Motor neuron (in vitro differentiated cells): ENCODE measurements at regions of chr19 and their contacts with region 1.

Region 1: DNA sequence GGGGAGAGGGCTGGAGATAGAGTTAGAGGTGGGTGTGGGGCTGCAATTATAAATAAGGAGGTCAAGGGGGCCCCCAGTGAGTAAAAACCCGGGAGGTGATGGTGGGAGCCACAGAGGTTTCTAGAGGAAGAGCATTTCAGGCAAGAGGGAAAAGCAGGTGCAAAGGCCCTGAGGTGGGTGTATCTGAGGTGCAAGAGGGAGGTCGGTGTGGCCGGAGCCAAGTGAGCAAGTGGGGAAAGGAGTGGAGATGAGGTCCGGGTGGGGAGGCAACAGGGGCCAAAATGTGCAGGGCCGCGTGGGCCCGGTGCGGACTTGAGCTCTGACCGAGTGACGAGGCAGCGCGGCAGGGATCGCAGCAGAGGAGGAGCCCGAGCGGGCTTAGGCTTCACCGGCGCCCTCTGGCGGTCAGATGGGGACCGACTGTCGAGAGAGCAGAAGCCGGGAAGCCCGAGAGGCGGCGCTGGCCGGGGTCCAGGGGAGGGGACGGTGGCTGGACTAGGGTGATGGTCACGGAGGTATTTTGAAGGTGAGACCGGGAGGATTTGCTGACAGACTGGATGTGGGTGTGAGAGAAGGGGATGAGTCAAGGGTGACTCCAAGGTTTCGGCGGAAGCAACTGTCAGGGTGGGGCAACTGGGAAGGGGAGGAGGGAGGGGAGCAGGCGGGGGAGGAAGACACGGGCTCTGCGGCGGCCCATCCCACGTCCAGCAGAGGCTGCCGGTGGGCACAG is 17.7 kb upstream of the SPACA4 start:
- ATAC-seq: peak; percentile 82 to 94 (median 86)
- H3K4me3 ChIP-seq: peak overlapping the region in 4 of 5 donors; percentile 8 to 27 (median 20)
- H3K27ac ChIP-seq: no peak overlapping the region
- H3K4me1 ChIP-seq: peaks cover 0 to 6% of the 10 kb centered on the region in 2 donors

Region 2: DNA sequence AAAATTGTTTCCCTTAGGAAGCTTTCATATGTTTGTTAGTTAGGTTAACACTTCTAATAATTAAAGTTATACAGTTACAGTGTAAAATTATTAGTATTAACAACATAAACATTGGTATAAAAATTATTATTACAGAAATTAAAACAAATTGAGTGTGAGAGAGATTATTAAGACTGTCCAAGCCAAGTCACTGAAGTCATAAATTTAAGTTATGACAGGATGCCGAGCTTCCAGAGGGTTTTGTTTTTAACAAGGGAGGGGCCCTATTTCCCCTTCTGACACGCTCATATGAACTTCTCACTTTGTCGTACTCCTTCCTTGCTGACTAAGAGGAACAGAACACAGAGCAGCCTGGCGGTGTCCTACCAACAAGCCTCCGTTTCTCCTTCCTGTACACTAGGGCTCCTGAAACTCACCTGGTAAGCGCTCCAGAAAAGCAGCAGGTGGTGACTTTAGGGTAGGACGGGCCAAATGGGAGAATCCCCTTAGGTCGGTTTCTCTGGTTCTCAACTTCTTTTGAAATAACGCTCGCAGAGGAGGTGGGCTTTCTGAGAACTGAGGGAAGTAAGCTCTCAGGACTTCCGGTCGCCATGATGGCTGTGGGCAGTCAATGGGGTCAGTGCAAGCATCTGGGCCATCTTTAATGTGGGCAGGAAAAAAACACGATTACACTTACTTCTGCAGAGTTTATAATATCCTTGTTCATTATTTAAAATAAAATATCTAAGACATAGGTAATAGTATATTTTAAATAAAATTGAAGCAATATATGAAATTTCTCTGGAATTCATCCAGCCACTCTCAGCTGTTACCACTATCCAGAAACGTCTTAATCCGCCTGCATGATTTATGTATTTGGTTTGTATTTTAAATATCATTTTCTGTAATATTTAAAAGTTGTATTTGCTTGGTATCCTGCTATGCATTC is 333.2 kb before region 1 on chr19 and contains the start of gene CARD8:
- in situ Hi-C with region 1: loop called in 2 of 9 experiments (anchors 25 kb)
- ATAC-seq: peak; percentile 63 to 96 (median 80)
- H3K4me3 ChIP-seq: peak within 1 kb of the TSS; percentile 51 to 96 (median 73)
- H3K27ac ChIP-seq: peak within 1 kb of the TSS; percentile 77 to 89
- H3K4me1 ChIP-seq: peaks cover 5 to 11% of the 10 kb centered on the region in 2 donors
- total RNA-seq, gene CARD8: 12.3 to 35.1 (median 16.8) TPM

Region 3: GRCh38 chr19:48271531-48272151 is 317.2 kb before region 1 on chr19:
- in situ Hi-C with region 1: loop called in 5 of 9 experiments (anchors 10 to 25 kb)
- ATAC-seq: peak; percentile 60 to 80 (median 78)
- H3K4me3 ChIP-seq: peak overlapping the region; percentile 42 to 73 (median 49)
- H3K27ac ChIP-seq: peak overlapping the region; percentile 26 to 76
- H3K4me1 ChIP-seq: peaks cover 0 to 4% of the 10 kb centered on the region in 2 donors

Region 4: DNA sequence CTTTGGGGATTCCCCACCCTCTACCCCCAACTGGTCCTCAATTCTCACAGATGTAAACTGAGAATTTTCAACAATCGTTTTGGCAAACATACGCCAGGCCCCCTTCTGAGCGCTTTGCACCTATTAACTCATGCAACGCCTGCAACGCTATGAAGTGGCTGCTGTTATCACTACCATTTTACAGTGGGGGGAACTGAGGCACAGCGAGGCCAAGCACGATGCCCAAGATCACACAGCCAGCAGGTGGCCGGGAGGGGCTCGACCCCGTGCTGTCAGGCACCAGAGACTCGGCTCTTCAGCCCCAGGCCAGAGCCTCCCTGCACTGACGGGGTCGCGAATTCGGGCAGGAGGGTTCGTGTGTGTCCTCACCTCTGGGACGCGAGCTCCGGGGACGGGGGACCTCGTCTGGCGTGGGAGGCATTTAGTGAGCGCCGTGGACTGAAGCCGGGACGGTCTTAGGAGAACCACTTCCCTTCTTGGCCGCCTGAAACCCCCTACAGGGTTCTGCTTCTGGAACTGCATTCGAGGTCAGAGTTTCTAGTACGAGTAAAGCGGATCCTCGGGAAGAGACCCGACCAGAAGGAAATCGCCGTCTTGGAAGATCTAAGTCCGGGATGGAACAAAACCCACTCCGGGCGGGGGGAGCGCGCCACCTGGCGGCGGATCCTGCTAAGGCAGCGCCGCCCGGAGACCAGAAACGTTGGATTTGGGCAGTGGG is 297.9 kb before region 1 on chr19:
- in situ Hi-C with region 1: loop called in 2 of 9 experiments (anchors 25 kb)
- ATAC-seq: peak; percentile 77 to 94 (median 87)
- H3K4me3 ChIP-seq: peak overlapping the region; percentile 23 to 34 (median 30)
- H3K27ac ChIP-seq: no peak overlapping the region
- H3K4me1 ChIP-seq: no peaks in the 10 kb centered on the region

Region 5: DNA sequence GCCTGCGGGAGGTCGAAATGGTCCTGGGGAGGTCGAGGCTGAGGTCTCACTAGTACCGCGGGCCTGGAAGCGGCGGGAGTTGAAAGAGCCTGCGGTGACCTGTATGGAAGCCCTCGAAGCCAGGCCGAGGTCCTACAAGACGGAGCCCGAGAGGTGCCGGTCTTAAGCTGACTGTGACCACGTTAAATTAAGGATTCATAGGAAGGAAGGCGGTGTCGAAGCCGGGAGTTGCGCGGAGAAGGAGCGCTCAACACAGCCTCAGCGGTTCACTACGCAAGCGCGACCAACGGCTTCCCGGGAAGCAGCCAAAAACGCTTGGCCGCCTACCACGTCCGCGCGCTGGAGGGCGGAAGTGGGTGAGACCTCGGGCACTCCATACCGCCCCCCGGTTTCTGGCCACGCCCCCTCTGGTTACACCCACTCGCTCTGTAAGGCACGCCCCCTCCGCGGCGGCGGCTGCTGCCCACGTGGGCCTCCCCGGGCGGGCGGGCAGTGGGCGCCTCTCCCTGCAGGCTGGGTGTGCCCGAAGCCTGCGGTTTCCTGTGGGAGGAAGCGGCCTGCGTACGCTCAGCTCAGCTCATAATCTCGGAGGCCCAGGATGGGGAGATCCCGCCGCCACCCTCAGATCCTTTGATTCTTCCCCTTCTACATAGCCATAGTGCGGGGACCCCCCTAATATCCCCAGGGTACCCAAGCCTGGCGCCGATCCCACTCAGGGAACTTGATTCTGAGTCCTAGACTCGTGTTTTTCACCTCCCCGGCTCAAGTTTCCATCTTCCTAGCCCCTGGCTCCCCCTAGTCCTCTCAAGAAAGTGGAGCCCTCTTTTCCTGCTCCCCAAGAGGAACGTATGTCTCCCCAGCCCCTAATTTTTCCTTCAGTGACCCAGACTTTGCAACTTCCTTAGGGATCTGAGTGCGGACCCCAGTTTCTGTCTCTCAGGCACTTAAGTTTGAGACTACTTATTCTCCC is 266.9 kb before region 1 on chr19:
- in situ Hi-C with region 1: loop called in 2 of 9 experiments (anchors 25 kb)
- ATAC-seq: peak; percentile 59 to 80 (median 76)
- H3K4me3 ChIP-seq: peak overlapping the region; percentile 32 to 48 (median 40)
- H3K27ac ChIP-seq: peak overlapping the region; percentile 85 to 93
- H3K4me1 ChIP-seq: peaks cover 7 to 42% of the 10 kb centered on the region in 2 donors

Region 6: GRCh38 chr19:48492925-48493717 is 95.7 kb before region 1 on chr19:
- in situ Hi-C with region 1: loop called in 2 of 9 experiments (anchors 25 kb)
- ATAC-seq: peak; percentile 77 to 87 (median 82)
- H3K4me3 ChIP-seq: peak overlapping the region; percentile 30 to 48 (median 42)
- H3K27ac ChIP-seq: peak overlapping the region in 1 of 2 donors; percentile 43
- H3K4me1 ChIP-seq: peaks cover 9 to 23% of the 10 kb centered on the region in 2 donors

Region 7: DNA sequence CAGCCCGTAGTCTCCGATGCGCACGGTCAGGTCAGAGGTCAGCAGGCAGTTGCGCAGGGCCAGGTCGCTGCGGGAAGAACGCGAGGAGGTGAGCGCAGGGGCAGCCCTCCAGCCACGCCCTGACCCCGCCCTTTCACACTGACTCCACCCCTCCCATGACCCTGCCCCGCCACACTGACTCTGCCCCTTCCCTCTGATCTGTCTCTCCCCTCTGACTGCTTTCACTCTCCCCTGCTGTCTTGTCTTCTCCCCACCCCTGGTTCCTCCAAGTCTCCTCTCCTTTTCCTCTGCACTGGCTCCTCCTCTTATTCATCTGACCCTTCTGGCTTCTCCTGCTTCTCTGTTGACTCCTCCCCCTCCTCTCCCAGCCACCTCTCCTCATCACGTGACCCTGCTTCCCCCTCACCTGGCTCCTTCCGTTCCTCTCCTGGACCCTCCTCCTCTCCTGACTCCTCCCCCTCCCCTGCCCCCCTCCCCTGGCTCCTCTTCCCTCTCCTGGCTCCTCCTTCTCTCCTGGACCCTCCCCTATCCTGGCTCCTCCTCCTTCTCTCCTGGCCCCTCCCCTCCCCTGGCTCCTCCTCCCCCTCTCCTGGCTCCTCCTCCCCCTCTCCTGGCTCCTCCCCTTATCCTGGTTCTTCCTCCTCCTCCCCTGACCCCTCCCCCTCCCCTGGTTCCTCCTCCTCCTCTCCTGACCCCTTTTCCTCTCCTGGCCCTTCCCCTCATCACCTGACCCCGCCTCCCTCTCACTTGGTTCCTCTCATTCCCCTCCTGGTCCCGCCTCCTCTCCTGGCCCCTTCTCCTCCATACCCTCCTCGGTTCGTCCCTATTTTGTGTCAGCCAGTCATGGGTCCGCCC is 87.1 kb before region 1 on chr19:
- in situ Hi-C with region 1: loop called in 3 of 9 experiments (anchors 10 to 25 kb)
- ATAC-seq: peak; percentile 12 to 82 (median 50)
- H3K4me3 ChIP-seq: no peak overlapping the region
- H3K27ac ChIP-seq: no peak overlapping the region
- H3K4me1 ChIP-seq: peaks cover 2 to 6% of the 10 kb centered on the region in 2 donors